Mucosa of descending colon (tissue), 3 donors: ENCODE measurements at regions of chr9 and their contacts with region 1.

Region 1: GRCh38 chr9:104863180-104863883 is 64.6 kb downstream of the ABCA1 start:
- DNase-seq: peak in 1 of 3 donors; percentile 64
- ATAC-seq: peak; percentile 78
- H3K4me3 ChIP-seq: no peak overlapping the region
- H3K4me1 ChIP-seq: peaks cover 5% of the 10 kb centered on the region
- CTCF ChIP-seq: no peak

Region 2: GRCh38 chr9:104927912-104928740 is 64.8 kb after region 1 on chr9 and contains the start of gene ABCA1:
- intact Hi-C with region 1: loop called in 1 of 2 experiments (anchors 10 kb)
- DNase-seq: peak; percentile 91 to 97 (median 95)
- ATAC-seq: peak; percentile 81
- H3K4me3 ChIP-seq: peak within 1 kb of the TSS; percentile 90
- H3K4me1 ChIP-seq: peaks cover 7% of the 10 kb centered on the region
- CTCF ChIP-seq: no peak
- total RNA-seq, gene ABCA1: 26.6 to 111 (median 36.8) TPM

Region 3: GRCh38 chr9:105053209-105053652 is 189.9 kb after region 1 on chr9:
- intact Hi-C with region 1: no loop called
- DNase-seq: peak in 1 of 3 donors; percentile 55
- ATAC-seq: peak; percentile 56
- H3K4me3 ChIP-seq: no peak overlapping the region
- H3K4me1 ChIP-seq: no peaks in the 10 kb centered on the region
- CTCF ChIP-seq: no peak

Region 4: GRCh38 chr9:105064315-105065097 is 201.2 kb after region 1 on chr9:
- intact Hi-C with region 1: loop called in 1 of 2 experiments (anchors 10 kb)
- DNase-seq: peak; percentile 91 to 93 (median 92)
- ATAC-seq: peak; percentile 94
- H3K4me3 ChIP-seq: no peak overlapping the region
- H3K4me1 ChIP-seq: peaks cover 23% of the 10 kb centered on the region
- CTCF ChIP-seq: no peak

Region 5: DNA sequence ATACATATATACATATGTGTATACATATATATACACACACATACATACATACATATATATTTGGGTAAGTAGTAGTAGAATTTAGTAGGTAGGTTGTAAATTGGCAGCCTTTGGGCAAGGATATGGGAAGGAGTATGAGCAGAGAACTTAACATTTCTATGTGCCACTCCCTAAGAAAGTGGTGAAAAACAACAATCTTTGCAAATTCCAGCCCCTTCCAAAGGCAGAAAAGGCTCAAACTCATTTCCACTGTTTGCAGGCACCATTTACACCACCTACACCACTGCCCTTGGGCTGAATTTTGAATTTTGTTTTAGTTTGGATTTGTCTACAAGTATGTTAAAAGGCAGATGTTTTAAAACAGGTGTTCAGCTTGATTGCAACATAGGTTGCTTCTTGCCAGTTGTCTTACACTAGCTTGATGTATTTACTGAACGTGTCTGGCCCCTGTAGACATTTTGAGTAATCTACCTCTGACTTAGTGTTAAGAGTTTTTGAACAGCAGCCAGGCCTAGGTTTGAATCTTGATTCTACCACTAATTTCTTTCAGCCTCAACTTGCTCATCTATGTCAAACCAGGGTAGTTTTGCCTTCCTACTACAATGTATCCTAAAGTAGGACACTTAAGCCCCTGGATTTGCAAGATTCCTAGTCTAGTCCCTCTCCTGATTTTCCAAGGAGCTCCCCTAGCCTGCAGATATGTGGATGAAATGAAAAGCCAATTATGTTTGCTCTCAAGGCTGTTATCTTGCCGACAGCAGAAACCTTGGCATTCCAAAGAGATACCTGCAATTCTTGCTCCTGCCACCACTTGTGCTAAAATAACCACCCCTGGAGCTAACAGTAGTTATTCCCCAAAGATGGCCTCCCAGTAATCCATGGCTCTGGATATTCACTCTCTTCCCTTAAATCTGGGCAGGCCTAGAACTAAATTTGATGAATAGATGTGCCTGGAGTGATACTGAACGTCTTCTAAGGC is 224.9 kb after region 1 on chr9:
- intact Hi-C with region 1: no loop called
- DNase-seq: no peak
- ATAC-seq: no peak
- H3K4me3 ChIP-seq: no peak overlapping the region
- H3K4me1 ChIP-seq: no peaks in the 10 kb centered on the region
- CTCF ChIP-seq: no peak

Region 6: DNA sequence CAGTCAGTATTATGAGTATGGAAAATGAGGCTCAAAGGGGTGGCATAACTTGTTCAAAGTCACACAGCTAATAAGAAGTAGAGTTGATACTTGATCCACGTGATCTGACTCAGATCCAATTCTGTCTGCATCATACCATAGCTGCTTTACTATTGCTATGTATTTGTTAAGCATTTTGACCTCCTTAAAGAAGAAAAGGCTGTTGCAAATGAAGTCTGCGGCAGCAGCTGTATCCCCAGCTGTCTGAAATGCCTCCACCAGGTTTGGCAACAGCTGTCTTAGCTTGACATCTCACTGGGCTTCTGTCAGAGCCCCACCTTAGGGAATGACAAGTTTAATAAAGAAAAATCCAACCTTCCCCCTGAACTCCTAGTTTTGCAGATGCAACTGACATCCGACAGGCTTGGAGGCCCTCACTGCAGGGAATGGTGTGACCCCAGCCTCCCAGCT is 305.6 kb after region 1 on chr9:
- intact Hi-C with region 1: loop called in 1 of 2 experiments (anchors 10 kb)
- DNase-seq: no peak
- ATAC-seq: no peak
- H3K4me3 ChIP-seq: no peak overlapping the region
- H3K4me1 ChIP-seq: no peaks in the 10 kb centered on the region
- CTCF ChIP-seq: no peak